Gastrocnemius medialis (tissue), 4 donors: ENCODE measurements at regions of chr10 and their contacts with region 1.

Region 1: DNA sequence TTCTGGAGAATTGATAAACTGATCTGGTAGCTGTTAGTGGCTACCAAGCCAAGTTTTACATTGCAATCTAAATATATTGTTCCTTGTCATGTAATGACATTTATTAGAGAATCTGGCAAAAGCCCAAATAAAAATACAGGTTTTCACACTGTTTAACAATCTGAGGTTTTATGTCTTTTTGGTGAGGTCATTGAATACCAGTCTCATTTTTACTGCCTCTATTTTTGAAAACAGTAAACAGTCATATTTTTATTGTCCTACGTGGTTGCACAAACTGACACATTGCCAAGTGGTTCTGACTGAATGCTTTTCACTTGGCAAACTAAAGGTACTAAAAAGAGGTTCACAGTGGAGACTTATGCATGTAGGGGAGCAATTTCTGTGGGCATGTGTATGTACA is 157.5 kb downstream of the PRKG1 start:
- DNase-seq: no peak
- ATAC-seq: no peak
- H3K4me3 ChIP-seq: no peak overlapping the region
- H3K27ac ChIP-seq: peak overlapping the region in 2 of 4 donors; percentile 3 to 9
- H3K4me1 ChIP-seq: peaks cover 40 to 63% of the 10 kb centered on the region in 2 donors
- H3K27me3 ChIP-seq: no peaks in the 10 kb centered on the region
- CTCF ChIP-seq: no peak
- POLR2A ChIP-seq: no peak

Region 2: GRCh38 chr10:51092402-51092801 is 139.4 kb before region 1 on chr10:
- in situ Hi-C with region 1: no loop called
- intact Hi-C with region 1: loop called (anchors 10 kb)
- DNase-seq: peak; percentile 57 to 79
- ATAC-seq: peak; percentile 80 to 87
- H3K4me3 ChIP-seq: no peak overlapping the region
- H3K27ac ChIP-seq: peak overlapping the region in 1 of 4 donors; percentile 6
- H3K4me1 ChIP-seq: peaks cover 19 to 54% of the 10 kb centered on the region in 2 donors
- H3K27me3 ChIP-seq: no peaks in the 10 kb centered on the region
- CTCF ChIP-seq: no peak
- POLR2A ChIP-seq: no peak

Region 3: GRCh38 chr10:51397695-51398094 is 165.9 kb after region 1 on chr10:
- in situ Hi-C with region 1: no loop called
- intact Hi-C with region 1: no loop called
- DNase-seq: peak; percentile 64 to 82
- ATAC-seq: peak; percentile 100
- H3K4me3 ChIP-seq: no peak overlapping the region
- H3K27ac ChIP-seq: peak overlapping the region; percentile 17 to 66 (median 36)
- H3K4me1 ChIP-seq: peaks cover 14 to 19% of the 10 kb centered on the region in 2 donors
- H3K27me3 ChIP-seq: no peaks in the 10 kb centered on the region
- CTCF ChIP-seq: no peak
- POLR2A ChIP-seq: no peak